ENCODE measurements at regions of chr1 and their contacts with region 1.

Region 1: DNA sequence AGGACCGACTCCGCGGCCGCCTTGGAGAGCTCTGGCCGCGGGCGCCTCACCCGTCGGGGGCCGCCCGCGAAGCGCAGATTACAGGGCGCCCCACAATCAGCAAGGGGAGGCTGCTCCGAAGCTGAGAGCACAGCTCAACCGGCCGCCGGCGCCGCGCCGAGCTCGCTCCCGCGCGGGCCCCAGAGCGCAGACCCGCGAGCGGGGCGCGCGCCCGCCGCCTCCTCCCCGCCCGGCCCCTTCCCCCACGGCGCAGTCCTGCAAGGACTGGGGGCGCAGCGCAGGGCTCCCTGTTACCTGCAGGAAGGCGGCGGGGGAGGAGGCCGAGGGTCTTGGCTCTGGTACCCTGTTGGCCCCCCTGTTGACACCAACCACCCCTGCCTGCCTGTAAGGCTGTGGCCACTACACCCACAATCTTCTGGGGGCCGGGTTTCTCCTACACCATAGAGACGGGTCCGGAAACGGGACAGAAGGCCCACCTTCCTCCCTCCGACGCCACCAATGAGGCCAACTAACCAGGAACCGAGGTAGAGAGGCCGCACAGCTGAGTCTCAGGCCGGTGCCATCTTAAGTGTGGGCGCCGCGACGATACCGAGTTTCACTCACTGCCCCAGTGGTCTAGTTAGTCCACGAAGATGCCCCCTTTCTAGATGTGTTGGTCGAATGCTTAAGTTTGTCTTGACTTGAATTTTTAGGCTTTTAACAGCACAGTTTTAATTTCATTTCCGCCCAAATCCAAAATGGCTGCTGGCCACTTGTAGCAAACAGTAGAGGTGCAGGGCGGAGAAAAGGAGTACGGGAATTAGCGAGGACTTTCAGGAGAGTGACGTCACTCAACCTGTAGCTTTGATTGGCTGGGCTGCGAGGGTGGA is at the start of gene SCYL3:
- DNase-seq: peak; percentile 90 to 96
- ATAC-seq: peak; percentile 97 to 98 (median 98)
- H3K4me3 ChIP-seq: peak within 1 kb of the TSS; percentile 77
- H3K27ac ChIP-seq: peak within 1 kb of the TSS; percentile 96
- H3K4me1 ChIP-seq: peaks cover 16% of the 10 kb centered on the region
- H3K27me3 ChIP-seq: peaks cover 0 to 7% (median 0%) of the 10 kb centered on the region in 3 donors
- CTCF ChIP-seq: no peak
- total RNA-seq, gene SCYL3: 6.7 to 8.5 (median 7.4) TPM

Region 2: DNA sequence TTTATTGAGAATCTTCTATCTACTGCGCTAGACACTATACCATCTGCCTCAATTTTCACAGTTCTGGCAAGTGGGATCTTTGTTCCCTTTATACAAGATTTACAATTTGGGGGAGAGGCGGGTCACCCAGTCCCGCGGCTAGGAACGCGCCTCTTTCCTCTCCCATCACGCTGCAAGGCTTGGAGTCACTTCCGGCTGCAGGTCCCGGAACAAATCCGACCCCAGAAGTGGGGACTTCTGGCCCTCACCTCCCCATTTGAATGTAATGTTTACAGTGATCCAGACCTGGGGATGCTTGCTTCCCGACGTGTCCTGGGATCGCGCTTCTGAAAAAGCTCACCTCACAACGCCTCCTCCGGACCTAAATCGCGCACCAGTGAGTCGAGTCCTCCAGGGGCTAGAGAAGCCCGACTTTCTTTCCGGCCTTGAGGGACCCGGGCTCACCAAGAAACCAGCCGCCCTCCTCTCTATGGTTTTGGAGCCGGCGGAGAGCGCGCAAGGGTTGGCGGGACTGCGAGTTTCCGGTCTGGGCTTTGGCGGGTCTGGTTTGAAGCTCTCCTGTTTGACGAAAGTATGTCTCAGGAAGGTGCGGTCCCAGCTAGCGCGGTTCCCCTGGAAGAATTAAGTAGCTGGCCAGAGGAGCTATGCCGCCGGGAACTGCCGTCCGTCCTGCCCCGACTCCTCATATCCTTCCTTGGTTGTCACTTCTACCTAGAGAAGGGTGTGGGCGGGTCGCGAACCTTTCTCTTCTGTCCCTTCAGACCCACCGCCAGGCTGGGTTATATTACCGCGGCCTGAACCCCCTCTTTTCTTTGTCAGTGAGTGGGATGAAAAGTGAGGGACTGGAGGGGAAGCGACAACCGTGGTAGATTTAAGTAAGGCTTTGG is 99.0 kb before region 1 on chr1 and contains the start of gene METTL18:
- intact Hi-C with region 1: loop called (anchors 5 kb)
- DNase-seq: peak; percentile 91 to 95
- ATAC-seq: peak; percentile 99 to 100 (median 100)
- H3K4me3 ChIP-seq: peak within 1 kb of the TSS; percentile 85
- H3K27ac ChIP-seq: peak within 1 kb of the TSS; percentile 93
- H3K4me1 ChIP-seq: peaks cover 23% of the 10 kb centered on the region
- H3K27me3 ChIP-seq: no peaks in the 10 kb centered on the region
- CTCF ChIP-seq: no peak
- total RNA-seq, gene METTL18: 3.4 to 5.0 (median 4.2) TPM

Region 3: GRCh38 chr1:169858467-169858866 is 35.3 kb before region 1 on chr1:
- intact Hi-C with region 1: no loop called
- DNase-seq: no peak
- ATAC-seq: no peak
- H3K4me3 ChIP-seq: no peak overlapping the region
- H3K27ac ChIP-seq: no peak overlapping the region
- H3K4me1 ChIP-seq: no peaks in the 10 kb centered on the region
- H3K27me3 ChIP-seq: no peaks in the 10 kb centered on the region
- CTCF ChIP-seq: no peak

Region 4: DNA sequence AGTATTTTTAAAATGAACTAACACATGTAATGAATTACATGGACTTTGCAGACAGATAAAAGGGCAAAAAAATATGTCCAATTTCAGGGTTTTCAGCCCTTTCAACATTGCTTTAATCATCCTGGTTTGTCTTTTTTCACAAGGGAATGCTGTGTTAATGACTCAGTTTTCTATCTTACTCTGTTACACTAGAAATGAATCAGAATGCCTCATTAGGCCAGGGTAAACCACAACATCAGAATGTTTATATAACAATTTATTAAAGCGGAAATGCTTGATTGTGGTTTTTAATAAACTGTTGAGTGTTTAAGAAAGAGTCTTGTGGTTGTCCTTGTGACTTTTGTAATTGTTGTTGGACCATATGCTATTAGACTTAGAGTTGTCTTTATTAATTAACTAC is 651.7 kb after region 1 on chr1:
- intact Hi-C with region 1: no loop called
- DNase-seq: no peak
- ATAC-seq: no peak
- H3K4me3 ChIP-seq: no peak overlapping the region
- H3K27ac ChIP-seq: no peak overlapping the region
- H3K4me1 ChIP-seq: no peaks in the 10 kb centered on the region
- H3K27me3 ChIP-seq: no peaks in the 10 kb centered on the region
- CTCF ChIP-seq: no peak